CD4-positive, alpha-beta memory T cell (primary cell): ENCODE measurements at regions of chr3 and their contacts with region 1.

Region 1: DNA sequence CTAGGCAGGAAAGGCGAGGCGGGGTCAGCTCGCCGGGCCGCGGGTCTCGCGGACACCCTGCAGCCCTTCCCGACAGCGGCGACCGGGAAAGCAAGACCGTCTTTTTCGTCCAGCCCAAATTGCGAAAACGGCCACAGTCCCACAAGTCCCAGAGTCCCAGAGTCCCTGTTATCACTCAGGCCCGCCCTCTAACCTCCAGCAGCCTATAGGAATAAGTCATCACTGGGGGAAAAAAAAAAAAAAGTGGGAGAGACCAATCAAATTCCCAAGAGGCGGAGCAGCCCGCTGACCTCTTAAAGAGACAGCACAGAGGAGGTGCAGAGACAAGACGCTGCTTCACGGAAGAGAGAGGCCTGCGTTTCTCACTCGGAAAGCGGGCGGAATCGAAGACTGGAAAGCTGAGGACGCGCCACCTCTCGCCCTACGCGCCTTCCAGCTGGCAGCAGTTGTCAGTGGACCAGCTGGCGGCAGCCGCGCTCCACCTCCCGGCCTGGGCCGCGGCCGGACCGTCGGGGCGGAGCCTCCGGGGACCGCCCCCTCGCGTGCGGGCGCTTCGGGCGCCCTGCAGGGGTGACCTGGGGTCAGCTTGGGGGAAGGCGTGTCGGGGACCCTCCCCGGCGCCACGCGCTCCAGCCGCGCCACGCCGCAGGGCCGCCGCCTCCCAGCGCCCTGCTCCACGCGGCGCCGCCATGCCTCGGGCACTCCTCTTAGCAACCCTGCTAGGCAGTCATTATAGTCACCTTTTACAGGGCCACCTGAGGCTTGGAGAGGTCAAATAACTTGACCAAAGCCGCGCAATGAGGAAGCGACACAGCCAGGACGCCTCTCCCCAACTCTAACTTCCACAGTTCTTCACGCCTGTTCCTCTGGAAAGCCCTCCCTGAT is at the start of gene TPRA1:
- DNase-seq: peak; percentile 83 to 90 (median 88)
- H3K4me3 ChIP-seq: peak within 1 kb of the TSS; percentile 81 to 83
- H3K4me3 Mint-ChIP-seq: peak within 1 kb of the TSS; percentile 96 to 100 (median 98)
- H3K27ac ChIP-seq: peak within 1 kb of the TSS; percentile 73
- H3K27ac Mint-ChIP-seq: peak within 1 kb of the TSS; percentile 93 to 98 (median 96)
- H3K4me1 ChIP-seq: peaks cover 26% of the 10 kb centered on the region
- H3K4me1 Mint-ChIP-seq: peaks cover 16 to 50% (median 36%) of the 10 kb centered on the region in 4 donors
- H3K27me3 ChIP-seq: no peaks in the 10 kb centered on the region
- H3K27me3 Mint-ChIP-seq: no peaks in the 10 kb centered on the region
- total RNA-seq, gene TPRA1: 28.3 to 29.7 TPM

Region 2: DNA sequence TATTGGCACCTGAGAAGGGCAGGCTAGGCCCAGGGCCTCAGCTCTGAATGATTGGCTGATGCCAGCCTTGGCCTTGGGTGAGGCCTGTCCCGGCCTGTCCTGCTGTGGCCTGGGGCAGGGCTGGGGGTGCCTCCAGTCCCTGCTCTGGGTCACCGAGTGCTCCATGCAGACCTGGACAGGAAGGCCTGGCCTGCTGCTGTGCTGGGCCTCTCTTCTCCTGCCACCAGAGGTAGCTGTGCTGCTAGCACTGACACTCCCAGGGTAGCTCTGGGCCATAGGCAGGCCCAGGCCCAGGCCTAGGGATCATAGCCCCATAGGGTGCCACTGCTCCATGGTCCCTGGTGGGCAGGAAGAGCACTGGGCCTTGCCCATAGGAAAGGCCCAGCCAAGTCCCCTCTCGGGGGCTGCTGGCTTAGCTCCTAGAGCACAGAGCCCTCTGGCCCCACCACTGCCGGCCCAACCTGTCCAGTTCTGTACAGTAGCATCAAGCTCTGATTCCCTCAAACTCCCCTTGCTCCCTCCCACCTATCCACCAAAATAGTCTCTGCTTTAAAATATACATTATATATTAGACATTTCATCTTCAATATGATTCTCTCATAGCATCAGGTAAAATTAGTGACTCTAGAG is 100.1 kb after region 1 on chr3:
- CTCF ChIA-PET with region 1: interaction called, 5 read pairs
- POLR2A ChIA-PET with region 1: no interaction called
- intact Hi-C with region 1: loop called (anchors 5 kb)
- DNase-seq: no peak
- H3K4me3 ChIP-seq: no peak overlapping the region
- H3K4me3 Mint-ChIP-seq: no peak overlapping the region
- H3K27ac ChIP-seq: no peak overlapping the region
- H3K27ac Mint-ChIP-seq: no peak overlapping the region
- H3K4me1 ChIP-seq: no peaks in the 10 kb centered on the region
- H3K4me1 Mint-ChIP-seq: no peaks in the 10 kb centered on the region
- H3K27me3 ChIP-seq: no peaks in the 10 kb centered on the region
- H3K27me3 Mint-ChIP-seq: peaks cover 0 to 1% of the 10 kb centered on the region in 2 donors